ENCODE measurements at regions of chr12 and their contacts with region 1.

Region 1: GRCh38 chr12:100234598-100235304 is 32.1 kb downstream of the DEPDC4 start:
- DNase-seq: peak; percentile 20 to 52 (median 22)
- ATAC-seq: peak; percentile 87
- H3K4me3 ChIP-seq: no peak overlapping the region
- H3K27ac ChIP-seq: no peak overlapping the region
- H3K4me1 ChIP-seq: no peaks in the 10 kb centered on the region
- H3K27me3 ChIP-seq: no peaks in the 10 kb centered on the region
- CTCF ChIP-seq: peak; percentile 62 to 85 (median 66); a peak in 5 of 6 replicates
- EP300 ChIP-seq: no peak
- POLR2A ChIP-seq: no peak
- RAD21 ChIP-seq: peak; percentile 76 to 87

Region 2: DNA sequence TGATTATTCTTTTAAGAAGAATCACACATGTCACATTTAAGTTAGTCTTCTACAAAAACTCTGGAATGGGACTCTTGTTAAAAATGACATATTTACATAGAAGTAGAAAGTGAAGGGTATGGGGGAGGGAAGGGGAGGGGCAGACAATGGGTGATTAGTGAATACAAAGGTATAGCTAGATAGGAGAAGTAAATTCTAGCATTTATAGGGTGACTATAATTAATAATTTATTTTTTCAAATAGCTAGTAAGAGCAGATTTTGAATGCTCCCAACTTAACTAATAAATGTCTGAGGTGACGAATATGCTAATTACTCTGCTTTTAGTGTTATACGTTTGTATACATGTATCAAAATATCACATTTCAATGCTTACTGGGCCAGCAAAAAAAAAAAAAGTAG is 151.4 kb before region 1 on chr12:
- CTCF ChIA-PET with region 1: no interaction called
- POLR2A ChIA-PET with region 1: no interaction called
- in situ Hi-C with region 1: no loop called
- intact Hi-C with region 1: no loop called
- DNase-seq: no peak
- ATAC-seq: no peak
- H3K4me3 ChIP-seq: no peak overlapping the region
- H3K27ac ChIP-seq: no peak overlapping the region
- H3K4me1 ChIP-seq: no peaks in the 10 kb centered on the region
- H3K27me3 ChIP-seq: no peaks in the 10 kb centered on the region
- CTCF ChIP-seq: no peak
- EP300 ChIP-seq: no peak
- POLR2A ChIP-seq: no peak
- RAD21 ChIP-seq: no peak

Region 3: DNA sequence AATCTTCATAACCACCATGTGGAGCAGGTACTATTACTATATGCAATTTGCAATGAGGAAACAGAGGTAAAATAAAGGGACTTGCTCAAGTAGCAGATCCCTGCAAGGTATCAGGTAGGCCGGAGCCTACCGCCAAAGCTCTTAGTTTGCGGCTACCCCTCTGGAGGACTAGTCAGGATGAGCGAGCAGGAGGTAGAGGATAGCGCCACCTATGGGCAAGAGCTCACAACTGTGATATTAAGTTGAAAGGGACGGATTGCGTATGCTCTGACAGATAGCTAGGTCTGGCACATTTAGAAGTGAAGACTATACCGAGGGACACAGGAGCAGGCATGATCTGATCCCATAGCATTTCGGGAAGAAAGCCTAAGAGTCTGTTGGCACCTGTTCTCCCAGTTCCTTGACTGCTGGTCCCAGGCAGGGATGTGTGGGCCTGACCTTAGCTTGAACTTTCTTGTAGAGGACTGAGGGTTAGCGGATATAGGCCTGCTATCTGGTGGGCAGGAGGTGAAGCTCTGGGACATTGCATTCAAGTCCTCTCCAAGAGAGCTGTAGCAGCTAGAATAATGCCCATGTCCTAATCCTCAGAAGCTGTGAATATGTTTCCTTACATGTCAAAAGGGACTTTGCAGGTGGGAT is 170.1 kb after region 1 on chr12:
- CTCF ChIA-PET with region 1: no interaction called
- POLR2A ChIA-PET with region 1: no interaction called
- in situ Hi-C with region 1: no loop called
- intact Hi-C with region 1: loop called (anchors 1 kb)
- DNase-seq: peak; percentile 56 to 79 (median 66)
- ATAC-seq: peak; percentile 100
- H3K4me3 ChIP-seq: no peak overlapping the region
- H3K27ac ChIP-seq: no peak overlapping the region
- H3K4me1 ChIP-seq: no peaks in the 10 kb centered on the region
- H3K27me3 ChIP-seq: peaks cover 0 to 7% of the 10 kb centered on the region in 2 experiments; a peak in 3 of 5 replicates
- CTCF ChIP-seq: peak; percentile 72 to 81 (median 78)
- EP300 ChIP-seq: no peak
- POLR2A ChIP-seq: no peak
- RAD21 ChIP-seq: peak in 1 of 2 experiments; percentile 67; a peak in 2 of 4 replicates

Region 4: DNA sequence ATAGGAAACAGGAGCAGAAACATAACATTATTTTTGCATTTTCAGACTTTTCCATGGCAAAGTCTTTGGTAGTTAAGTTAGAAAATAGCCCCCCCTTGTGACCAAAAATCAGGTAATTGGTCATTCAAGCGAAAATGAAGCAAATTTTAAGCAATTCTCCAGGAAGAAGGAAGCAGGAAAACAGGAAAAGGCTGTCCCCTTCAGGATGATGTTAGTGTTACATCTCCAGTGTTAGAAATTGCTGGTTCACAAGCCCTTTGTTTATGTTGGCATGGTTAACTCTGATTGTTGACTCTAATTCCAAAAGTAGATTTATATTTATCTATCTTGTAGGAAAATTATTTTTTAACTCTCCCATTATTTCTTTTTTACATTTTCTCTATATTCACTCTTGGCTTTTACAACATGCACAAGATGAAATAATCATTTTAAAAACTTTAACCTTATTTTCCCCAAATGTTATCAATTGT is 319.9 kb after region 1 on chr12:
- CTCF ChIA-PET with region 1: interaction called, 32 read pairs
- POLR2A ChIA-PET with region 1: no interaction called
- in situ Hi-C with region 1: no loop called
- intact Hi-C with region 1: loop called (anchors 1 kb)
- DNase-seq: peak; percentile 53 to 79 (median 68)
- ATAC-seq: peak; percentile 95
- H3K4me3 ChIP-seq: no peak overlapping the region
- H3K27ac ChIP-seq: no peak overlapping the region
- H3K4me1 ChIP-seq: no peaks in the 10 kb centered on the region
- H3K27me3 ChIP-seq: no peaks in the 10 kb centered on the region
- CTCF ChIP-seq: peak; percentile 89 to 99 (median 91)
- EP300 ChIP-seq: no peak
- POLR2A ChIP-seq: no peak
- RAD21 ChIP-seq: peak; percentile 94 to 96

Region 5: GRCh38 chr12:100741084-100741711 is 506.4 kb after region 1 on chr12:
- CTCF ChIA-PET with region 1: no interaction called
- POLR2A ChIA-PET with region 1: no interaction called
- in situ Hi-C with region 1: no loop called
- intact Hi-C with region 1: loop called (anchors 5 kb)
- DNase-seq: peak; percentile 19 to 33 (median 28)
- ATAC-seq: peak; percentile 58
- H3K4me3 ChIP-seq: no peak overlapping the region
- H3K27ac ChIP-seq: no peak overlapping the region
- H3K4me1 ChIP-seq: no peaks in the 10 kb centered on the region
- H3K27me3 ChIP-seq: no peaks in the 10 kb centered on the region
- CTCF ChIP-seq: peak; percentile 33 to 70 (median 65); a peak in 5 of 6 replicates
- EP300 ChIP-seq: no peak
- POLR2A ChIP-seq: no peak
- RAD21 ChIP-seq: peak; percentile 23 to 55; a peak in 3 of 4 replicates

Measured in K562 (cell line).